Thyroid gland (tissue), 4 donors: ENCODE measurements at regions of chr20 and their contacts with region 1.

Region 1: DNA sequence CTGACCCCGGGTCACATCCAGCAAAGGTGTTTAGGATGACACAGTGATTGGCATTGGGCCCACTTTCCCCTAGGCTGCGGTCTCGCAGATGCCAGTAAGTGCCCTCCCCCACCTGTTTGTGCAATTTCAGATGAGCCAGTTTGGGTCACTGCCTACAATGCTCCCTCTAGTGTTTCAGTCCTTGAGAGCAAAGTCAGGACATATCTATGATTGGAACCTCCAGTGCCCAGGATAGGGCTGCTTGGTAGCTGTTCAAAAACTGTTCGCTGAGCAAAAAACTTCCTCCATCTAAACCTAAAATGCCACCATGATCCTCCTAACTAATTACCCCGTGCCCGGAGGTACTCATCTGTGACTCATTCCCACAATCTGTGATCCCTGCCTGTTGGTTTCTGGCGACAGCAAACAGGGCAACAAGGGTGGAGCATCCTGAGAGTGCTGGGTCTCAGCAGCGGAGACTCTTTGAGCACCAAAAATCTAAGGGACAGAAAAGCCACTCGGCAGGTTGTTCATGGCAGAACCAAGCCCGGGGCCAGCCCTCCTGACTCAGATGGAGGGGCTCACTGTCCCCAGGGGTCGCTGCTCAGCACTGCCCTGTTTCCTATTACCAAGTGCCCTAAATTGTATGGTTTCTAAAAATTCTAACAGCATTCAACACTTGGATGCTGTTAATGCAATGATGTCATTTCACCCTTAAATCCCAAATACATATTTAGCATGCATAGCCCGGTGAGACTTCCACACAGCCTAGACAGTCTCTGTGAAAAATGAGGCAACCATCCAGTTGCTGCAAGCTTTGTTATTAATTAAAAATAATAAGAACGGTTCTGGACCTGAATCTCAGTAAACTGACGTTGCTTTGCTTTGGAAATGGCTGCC is 5.0 kb downstream of the VSX1 start:
- DNase-seq: peak in 1 of 2 donors; percentile 40
- H3K4me3 ChIP-seq: no peak overlapping the region
- H3K27ac ChIP-seq: no peak overlapping the region
- H3K4me1 ChIP-seq: peaks cover 11 to 17% of the 10 kb centered on the region in 2 donors
- H3K27me3 ChIP-seq: peaks cover 17% of the 10 kb centered on the region
- CTCF ChIP-seq: peak in 2 of 6 experiments; percentile 19 to 27
- POLR2A ChIP-seq: no peak

Region 2: GRCh38 chr20:24781422-24781980 is 295.5 kb before region 1 on chr20:
- intact Hi-C with region 1: no loop called
- DNase-seq: peak; percentile 21 to 36
- H3K4me3 ChIP-seq: no peak overlapping the region
- H3K27ac ChIP-seq: no peak overlapping the region
- H3K4me1 ChIP-seq: peaks cover 27 to 62% of the 10 kb centered on the region in 2 donors
- H3K27me3 ChIP-seq: no peaks in the 10 kb centered on the region
- CTCF ChIP-seq: peak in 4 of 6 experiments; percentile 31 to 49 (median 42)
- POLR2A ChIP-seq: no peak

Region 3: GRCh38 chr20:25407311-25408169 is 330.6 kb after region 1 on chr20 and contains the start of gene GINS1:
- intact Hi-C with region 1: loop called (anchors 10 kb)
- DNase-seq: peak; percentile 81 to 87
- H3K4me3 ChIP-seq: peak within 1 kb of the TSS; percentile 20 to 59 (median 53)
- H3K27ac ChIP-seq: peak within 1 kb of the TSS in 2 of 3 donors; percentile 18 to 36
- H3K4me1 ChIP-seq: peaks cover 5 to 7% of the 10 kb centered on the region in 2 donors
- H3K27me3 ChIP-seq: no peaks in the 10 kb centered on the region
- CTCF ChIP-seq: no peak
- POLR2A ChIP-seq: no peak
- total RNA-seq, gene GINS1: 0.44 to 1.5 (median 0.89) TPM in 3 of 4 donors, not detected in the other